ENCODE measurements at regions of chr7 and their contacts with region 1.

Region 1: DNA sequence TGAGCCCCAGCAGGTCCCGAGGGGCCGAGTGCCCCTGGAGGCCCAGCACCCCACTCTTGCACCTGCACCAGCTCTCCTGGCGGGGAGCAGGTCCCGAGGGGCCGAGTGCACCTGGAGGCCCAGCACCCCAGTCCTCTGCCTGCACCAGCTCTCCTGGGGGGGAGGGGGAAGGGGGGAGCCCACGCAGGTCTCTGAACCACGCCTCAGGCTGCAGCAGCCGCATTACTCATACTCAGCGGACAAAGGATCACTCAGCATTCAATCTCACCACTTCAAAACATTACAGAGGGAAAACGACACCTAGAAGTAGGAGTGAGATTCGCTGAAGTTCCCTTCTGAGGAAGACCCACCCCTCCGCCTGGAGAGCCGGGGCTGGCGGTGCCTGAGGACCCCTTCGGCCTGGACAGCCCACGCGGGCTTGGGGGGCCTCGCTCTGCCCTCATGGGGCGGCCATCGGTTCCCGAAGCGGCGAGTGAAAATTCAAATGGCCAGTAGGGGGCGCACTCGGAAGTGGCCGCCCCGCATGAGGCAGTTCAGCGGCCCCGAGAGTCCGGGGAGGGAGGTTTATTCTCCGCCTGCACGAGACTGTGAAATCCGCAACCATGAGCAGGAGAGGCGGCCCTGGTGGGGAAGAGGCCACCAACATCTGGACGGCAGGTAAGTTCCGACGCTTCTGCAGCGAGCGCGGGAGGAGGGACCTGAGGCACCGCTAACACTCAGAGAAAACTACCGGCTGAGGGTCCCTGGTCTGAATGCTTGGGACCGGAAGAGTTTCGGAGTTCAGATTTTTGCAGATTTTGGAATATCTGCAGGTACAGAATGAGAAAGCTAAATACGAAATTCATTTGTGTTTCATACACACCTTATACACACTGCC is 1.1 kb upstream of the GPER1 start:
- DNase-seq: no peak
- H3K4me3 ChIP-seq: peak overlapping the region; percentile 43 to 63 (median 55)
- H3K27ac ChIP-seq: peak overlapping the region; percentile 71 to 84 (median 82)
- H3K4me1 ChIP-seq: peaks cover 35 to 63% (median 50%) of the 10 kb centered on the region in 4 donors
- H3K27me3 ChIP-seq: no peaks in the 10 kb centered on the region
- CTCF ChIP-seq: peak; percentile 79 to 92 (median 91)
- EP300 ChIP-seq: no peak
- POLR2A ChIP-seq: no peak

Region 2: DNA sequence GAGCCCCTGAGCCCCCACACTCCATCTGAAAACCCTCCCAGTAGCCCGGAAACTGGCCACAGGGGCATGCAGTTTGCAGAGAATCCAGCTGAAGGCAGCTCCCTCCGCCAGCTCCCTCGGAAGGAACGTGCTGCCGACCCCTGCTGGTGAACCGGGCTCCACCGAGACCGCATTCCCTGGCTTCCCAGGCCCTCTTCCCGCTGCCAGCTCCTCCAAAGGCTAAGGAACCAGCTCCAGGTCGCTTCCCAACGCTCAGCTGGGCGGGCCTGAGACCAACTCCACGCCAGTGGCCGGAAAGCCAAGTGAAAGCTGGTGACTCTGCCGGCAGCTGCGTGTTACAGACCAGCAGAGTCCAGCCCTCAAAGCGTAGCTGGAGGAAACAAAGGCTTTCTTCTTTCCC is 36.9 kb after region 1 on chr7:
- intact Hi-C with region 1: loop called (anchors 2 kb)
- DNase-seq: peak; percentile 94
- H3K4me3 ChIP-seq: peak overlapping the region; percentile 26 to 47 (median 29)
- H3K27ac ChIP-seq: peak overlapping the region; percentile 74 to 84 (median 79)
- H3K4me1 ChIP-seq: peaks cover 19 to 36% (median 27%) of the 10 kb centered on the region in 4 donors
- H3K27me3 ChIP-seq: no peaks in the 10 kb centered on the region
- CTCF ChIP-seq: peak; percentile 61 to 83 (median 71)
- EP300 ChIP-seq: no peak
- POLR2A ChIP-seq: no peak

Region 3: GRCh38 chr7:1137510-1138167 is 50.8 kb after region 1 on chr7:
- intact Hi-C with region 1: loop called (anchors 5 kb)
- DNase-seq: no peak
- H3K4me3 ChIP-seq: peak overlapping the region; percentile 66 to 81 (median 74)
- H3K27ac ChIP-seq: peak overlapping the region; percentile 79 to 87 (median 84)
- H3K4me1 ChIP-seq: peaks cover 15 to 20% (median 19%) of the 10 kb centered on the region in 4 donors
- H3K27me3 ChIP-seq: no peaks in the 10 kb centered on the region
- CTCF ChIP-seq: no peak
- EP300 ChIP-seq: no peak
- POLR2A ChIP-seq: no peak

Region 4: GRCh38 chr7:1175967-1176851 is 89.4 kb after region 1 on chr7:
- intact Hi-C with region 1: loop called (anchors 5 kb)
- DNase-seq: peak; percentile 96
- H3K4me3 ChIP-seq: peak overlapping the region; percentile 31 to 42 (median 32)
- H3K27ac ChIP-seq: peak overlapping the region in 1 of 4 donors; percentile 8
- H3K4me1 ChIP-seq: peaks cover 8 to 17% (median 13%) of the 10 kb centered on the region in 4 donors
- H3K27me3 ChIP-seq: peaks cover 0 to 16% (median 0%) of the 10 kb centered on the region in 4 donors
- CTCF ChIP-seq: peak in 2 of 3 experiments; percentile 88 to 90
- EP300 ChIP-seq: no peak
- POLR2A ChIP-seq: no peak

Measured in esophagus muscularis mucosa (tissue), 4 donors.